CD8-positive, alpha-beta T cell (primary cell): ENCODE measurements at regions of chr19 and their contacts with region 1.

Region 1: GRCh38 chr19:47157431-47158321 is 27.0 kb downstream of the SAE1 start:
- DNase-seq: peak in 6 of 9 experiments; percentile 37 to 80 (median 64)
- ATAC-seq: peak; percentile 22
- H3K4me3 ChIP-seq: peak overlapping the region; percentile 14 to 42
- H3K4me3 Mint-ChIP-seq: peak overlapping the region; percentile 74
- H3K27ac ChIP-seq: peak overlapping the region; percentile 41 to 48
- H3K27ac Mint-ChIP-seq: peak overlapping the region; percentile 95
- H3K4me1 ChIP-seq: peaks cover 61% of the 10 kb centered on the region
- H3K4me1 Mint-ChIP-seq: peaks cover 73% of the 10 kb centered on the region
- H3K27me3 ChIP-seq: no peaks in the 10 kb centered on the region
- H3K27me3 Mint-ChIP-seq: no peaks in the 10 kb centered on the region
- CTCF ChIP-seq: no peak

Region 2: GRCh38 chr19:46299004-46299509 is 858.6 kb before region 1 on chr19:
- CTCF ChIA-PET with region 1: no interaction called
- POLR2A ChIA-PET with region 1: no interaction called
- intact Hi-C with region 1: no loop called
- DNase-seq: no peak
- ATAC-seq: no peak
- H3K4me3 ChIP-seq: no peak overlapping the region
- H3K4me3 Mint-ChIP-seq: no peak overlapping the region
- H3K27ac ChIP-seq: no peak overlapping the region
- H3K27ac Mint-ChIP-seq: no peak overlapping the region
- H3K4me1 ChIP-seq: no peaks in the 10 kb centered on the region
- H3K4me1 Mint-ChIP-seq: no peaks in the 10 kb centered on the region
- H3K27me3 ChIP-seq: peaks cover 14 to 17% of the 10 kb centered on the region in 2 experiments
- H3K27me3 Mint-ChIP-seq: peaks cover 25% of the 10 kb centered on the region
- CTCF ChIP-seq: no peak

Region 3: GRCh38 chr19:47176627-47177090 is 19.0 kb after region 1 on chr19:
- CTCF ChIA-PET with region 1: interaction called, 9 read pairs
- POLR2A ChIA-PET with region 1: interaction called, 20 read pairs
- intact Hi-C with region 1: loop called (anchors 1 to 2 kb)
- DNase-seq: peak in 8 of 9 experiments; percentile 12 to 77 (median 48)
- ATAC-seq: peak; percentile 85
- H3K4me3 ChIP-seq: peak overlapping the region in 1 of 2 experiments; percentile 2
- H3K4me3 Mint-ChIP-seq: peak overlapping the region; percentile 64
- H3K27ac ChIP-seq: peak overlapping the region; percentile 18 to 50
- H3K27ac Mint-ChIP-seq: peak overlapping the region; percentile 95
- H3K4me1 ChIP-seq: peaks cover 59% of the 10 kb centered on the region
- H3K4me1 Mint-ChIP-seq: peaks cover 69% of the 10 kb centered on the region
- H3K27me3 ChIP-seq: no peaks in the 10 kb centered on the region
- H3K27me3 Mint-ChIP-seq: no peaks in the 10 kb centered on the region
- CTCF ChIP-seq: no peak

Region 4: GRCh38 chr19:47225746-47226425 is 68.2 kb after region 1 on chr19:
- CTCF ChIA-PET with region 1: interaction called, 22 read pairs
- POLR2A ChIA-PET with region 1: interaction called, 14 read pairs
- intact Hi-C with region 1: loop called in 1 of 2 experiments (anchors 2 kb)
- DNase-seq: peak; percentile 80 to 95 (median 86)
- ATAC-seq: peak; percentile 47
- H3K4me3 ChIP-seq: peak overlapping the region; percentile 48 to 68
- H3K4me3 Mint-ChIP-seq: peak overlapping the region; percentile 81
- H3K27ac ChIP-seq: peak overlapping the region; percentile 73 to 89
- H3K27ac Mint-ChIP-seq: peak overlapping the region; percentile 92
- H3K4me1 ChIP-seq: peaks cover 40% of the 10 kb centered on the region
- H3K4me1 Mint-ChIP-seq: peaks cover 16% of the 10 kb centered on the region
- H3K27me3 ChIP-seq: no peaks in the 10 kb centered on the region
- H3K27me3 Mint-ChIP-seq: no peaks in the 10 kb centered on the region
- CTCF ChIP-seq: peak; percentile 51